Natural killer cell (primary cell): ENCODE measurements at regions of chr5 and their contacts with region 1.

Region 1: GRCh38 chr5:74631081-74631953 is 9.2 kb downstream of the ENC1 start:
- DNase-seq: peak; percentile 43 to 73
- ATAC-seq: peak; percentile 66 to 88 (median 77)
- H3K4me3 ChIP-seq: no peak overlapping the region
- H3K4me3 Mint-ChIP-seq: peak overlapping the region; percentile 66
- H3K27ac ChIP-seq: peak overlapping the region; percentile 94
- H3K27ac Mint-ChIP-seq: peak overlapping the region; percentile 95 to 97
- H3K4me1 ChIP-seq: peaks cover 37% of the 10 kb centered on the region
- H3K4me1 Mint-ChIP-seq: peaks cover 61 to 68% of the 10 kb centered on the region in 2 donors
- H3K27me3 ChIP-seq: no peaks in the 10 kb centered on the region
- H3K27me3 Mint-ChIP-seq: no peaks in the 10 kb centered on the region
- CTCF ChIP-seq: no peak

Region 2: GRCh38 chr5:74382987-74383593 is 248.2 kb before region 1 on chr5:
- intact Hi-C with region 1: no loop called
- DNase-seq: no peak
- ATAC-seq: no peak
- H3K4me3 ChIP-seq: no peak overlapping the region
- H3K4me3 Mint-ChIP-seq: no peak overlapping the region
- H3K27ac ChIP-seq: no peak overlapping the region
- H3K27ac Mint-ChIP-seq: no peak overlapping the region
- H3K4me1 ChIP-seq: no peaks in the 10 kb centered on the region
- H3K4me1 Mint-ChIP-seq: no peaks in the 10 kb centered on the region
- H3K27me3 ChIP-seq: no peaks in the 10 kb centered on the region
- H3K27me3 Mint-ChIP-seq: peaks cover 19 to 33% of the 10 kb centered on the region in 2 donors
- CTCF ChIP-seq: no peak

Region 3: GRCh38 chr5:74579215-74579614 is 52.1 kb before region 1 on chr5:
- intact Hi-C with region 1: loop called (anchors 2 kb)
- DNase-seq: peak; percentile 41 to 66
- ATAC-seq: peak; percentile 76 to 81 (median 80)
- H3K4me3 ChIP-seq: no peak overlapping the region
- H3K4me3 Mint-ChIP-seq: peak overlapping the region; percentile 63
- H3K27ac ChIP-seq: peak overlapping the region; percentile 15
- H3K27ac Mint-ChIP-seq: peak overlapping the region; percentile 77 to 78
- H3K4me1 ChIP-seq: peaks cover 32% of the 10 kb centered on the region
- H3K4me1 Mint-ChIP-seq: peaks cover 38% of the 10 kb centered on the region in 2 donors
- H3K27me3 ChIP-seq: no peaks in the 10 kb centered on the region
- H3K27me3 Mint-ChIP-seq: no peaks in the 10 kb centered on the region
- CTCF ChIP-seq: no peak